ENCODE measurements at regions of chr3 and their contacts with region 1.

Region 1: GRCh38 chr3:134918441-134918840 is 123.4 kb downstream of the EPHB1 start:
- DNase-seq: peak; percentile 78
- ATAC-seq: peak; percentile 97
- H3K4me3 ChIP-seq: no peak overlapping the region
- H3K27ac ChIP-seq: peak overlapping the region; percentile 80
- H3K4me1 ChIP-seq: peaks cover 21% of the 10 kb centered on the region
- H3K27me3 ChIP-seq: no peaks in the 10 kb centered on the region
- CTCF ChIP-seq: no peak
- EP300 ChIP-seq: 0 out of 4 replicates have a peak, but pooled peaks of 1 of the 2 experiments have one; percentile 10
- POLR2A ChIP-seq: no peak
- RAD21 ChIP-seq: no peak

Region 2: DNA sequence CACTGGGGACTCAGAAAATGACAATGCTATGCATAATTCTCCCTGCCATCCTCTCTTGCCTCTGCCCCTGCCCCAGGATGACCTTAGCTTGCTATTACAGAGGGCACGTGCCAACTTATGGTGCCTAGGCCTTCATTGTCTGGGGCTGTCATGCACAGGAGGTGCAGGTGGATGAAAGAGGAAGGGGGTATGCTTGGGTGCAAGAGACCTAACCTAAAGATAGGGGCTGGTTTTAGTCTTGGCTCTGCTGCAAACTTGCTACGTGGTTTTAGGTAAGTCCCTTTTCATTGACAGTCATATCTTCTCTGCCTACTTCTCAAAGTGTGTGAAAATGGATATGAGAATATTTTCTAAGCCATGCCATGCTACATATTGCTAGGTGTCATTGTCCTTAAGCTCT is 38.0 kb after region 1 on chr3:
- CTCF ChIA-PET with region 1: no interaction called
- POLR2A ChIA-PET with region 1: no interaction called
- RAD21 ChIA-PET with region 1: interaction called, 3 read pairs
- SMC1A ChIA-PET with region 1: interaction called, 10 read pairs
- in situ Hi-C with region 1: no loop called
- intact Hi-C with region 1: no loop called
- DNase-seq: peak; percentile 76
- ATAC-seq: peak; percentile 85
- H3K4me3 ChIP-seq: no peak overlapping the region
- H3K27ac ChIP-seq: peak overlapping the region; percentile 73
- H3K4me1 ChIP-seq: peaks cover 27% of the 10 kb centered on the region
- H3K27me3 ChIP-seq: no peaks in the 10 kb centered on the region
- CTCF ChIP-seq: no peak
- EP300 ChIP-seq: no peak
- POLR2A ChIP-seq: no peak
- RAD21 ChIP-seq: no peak

Measured in GM12878 (cell line).